Colonic mucosa (tissue), 4 donors: ENCODE measurements at regions of chr12 and their contacts with region 1.

Region 1: GRCh38 chr12:10771132-10771733 is 31.2 kb downstream of the TAS2R7 start:
- DNase-seq: no peak
- H3K4me3 ChIP-seq: no peak overlapping the region
- H3K27ac ChIP-seq: no peak overlapping the region
- H3K4me1 ChIP-seq: no peaks in the 10 kb centered on the region
- H3K27me3 ChIP-seq: no peaks in the 10 kb centered on the region
- CTCF ChIP-seq: peak; percentile 53

Region 2: DNA sequence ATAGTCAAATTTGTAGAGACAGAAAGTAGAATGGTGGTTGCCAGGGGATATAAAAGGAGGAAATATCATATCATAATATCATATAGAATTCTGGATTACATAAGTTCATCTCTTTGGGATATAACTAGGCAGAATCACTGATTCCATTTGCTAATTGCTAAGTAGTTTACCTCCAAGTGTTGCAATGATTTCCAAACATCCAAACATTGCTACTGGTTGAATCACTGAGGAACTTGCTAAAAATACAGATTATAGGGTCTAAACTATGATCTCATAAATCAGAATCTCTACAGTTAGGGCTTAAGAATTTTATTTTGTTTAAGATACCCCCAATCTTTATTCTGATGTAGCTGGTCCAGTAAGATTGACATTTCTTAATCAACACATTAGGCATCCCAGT is 431.6 kb after region 1 on chr12:
- intact Hi-C with region 1: loop called (anchors 5 kb)
- DNase-seq: no peak
- H3K4me3 ChIP-seq: no peak overlapping the region
- H3K27ac ChIP-seq: no peak overlapping the region
- H3K4me1 ChIP-seq: no peaks in the 10 kb centered on the region
- H3K27me3 ChIP-seq: no peaks in the 10 kb centered on the region
- CTCF ChIP-seq: no peak

Region 3: DNA sequence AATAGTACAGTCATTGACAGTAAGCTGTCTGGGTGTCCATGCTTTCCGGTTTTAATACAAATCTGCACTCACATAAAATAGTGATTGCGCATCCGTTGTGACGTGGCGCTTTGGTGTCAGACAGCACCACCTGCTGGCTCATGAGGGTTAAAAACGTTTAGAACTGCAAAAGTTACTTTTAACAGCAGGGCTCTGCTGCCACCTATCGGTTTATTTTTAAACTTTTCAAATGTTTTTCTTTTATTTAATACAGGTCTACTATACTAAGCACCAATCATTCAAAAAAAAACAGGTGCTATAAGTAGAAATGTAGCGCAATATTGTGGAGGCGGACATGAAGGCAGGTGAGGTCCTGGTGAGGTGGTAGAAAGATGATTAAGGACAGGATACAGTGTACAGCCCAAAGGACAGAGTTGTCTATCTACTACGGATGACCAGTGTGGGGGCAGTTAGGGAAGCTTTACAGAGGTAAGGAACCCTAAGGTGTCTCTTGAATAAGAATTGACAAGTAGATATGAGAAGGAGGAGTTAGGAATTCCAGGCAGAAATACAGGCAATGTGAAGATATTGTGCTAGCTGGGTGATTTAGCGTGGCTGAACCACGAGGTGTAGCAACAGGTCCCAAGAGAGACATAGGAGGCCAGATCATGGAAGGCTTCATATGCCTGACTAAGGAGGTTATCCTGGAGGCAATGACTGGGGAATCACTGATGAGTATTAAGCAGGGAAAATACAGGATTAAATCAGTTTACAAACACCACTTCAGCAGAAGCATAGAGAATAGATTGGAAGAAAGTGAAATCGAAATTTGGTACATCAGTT is 715.6 kb after region 1 on chr12:
- intact Hi-C with region 1: loop called (anchors 5 kb)
- DNase-seq: peak; percentile 79
- H3K4me3 ChIP-seq: no peak overlapping the region
- H3K27ac ChIP-seq: no peak overlapping the region
- H3K4me1 ChIP-seq: no peaks in the 10 kb centered on the region
- H3K27me3 ChIP-seq: no peaks in the 10 kb centered on the region
- CTCF ChIP-seq: peak; percentile 93